Activated CD8-positive, alpha-beta T cell treated with anti-CD3 and anti-CD28 coated beads, Interleukin-2, amount 10 ng/mL, durations not matched to agents 7 days and 5 days (primary cell): ENCODE measurements at regions of chr11 and their contacts with region 1.

Region 1: GRCh38 chr11:130861902-130862860 is 54.1 kb downstream of the SNX19 start:
- DNase-seq: peak; percentile 91
- ATAC-seq: peak; percentile 94
- H3K4me3 Mint-ChIP-seq: no peak overlapping the region
- H3K27ac Mint-ChIP-seq: no peak overlapping the region
- H3K4me1 Mint-ChIP-seq: no peaks in the 10 kb centered on the region
- H3K27me3 Mint-ChIP-seq: peaks cover 3% of the 10 kb centered on the region

Region 2: DNA sequence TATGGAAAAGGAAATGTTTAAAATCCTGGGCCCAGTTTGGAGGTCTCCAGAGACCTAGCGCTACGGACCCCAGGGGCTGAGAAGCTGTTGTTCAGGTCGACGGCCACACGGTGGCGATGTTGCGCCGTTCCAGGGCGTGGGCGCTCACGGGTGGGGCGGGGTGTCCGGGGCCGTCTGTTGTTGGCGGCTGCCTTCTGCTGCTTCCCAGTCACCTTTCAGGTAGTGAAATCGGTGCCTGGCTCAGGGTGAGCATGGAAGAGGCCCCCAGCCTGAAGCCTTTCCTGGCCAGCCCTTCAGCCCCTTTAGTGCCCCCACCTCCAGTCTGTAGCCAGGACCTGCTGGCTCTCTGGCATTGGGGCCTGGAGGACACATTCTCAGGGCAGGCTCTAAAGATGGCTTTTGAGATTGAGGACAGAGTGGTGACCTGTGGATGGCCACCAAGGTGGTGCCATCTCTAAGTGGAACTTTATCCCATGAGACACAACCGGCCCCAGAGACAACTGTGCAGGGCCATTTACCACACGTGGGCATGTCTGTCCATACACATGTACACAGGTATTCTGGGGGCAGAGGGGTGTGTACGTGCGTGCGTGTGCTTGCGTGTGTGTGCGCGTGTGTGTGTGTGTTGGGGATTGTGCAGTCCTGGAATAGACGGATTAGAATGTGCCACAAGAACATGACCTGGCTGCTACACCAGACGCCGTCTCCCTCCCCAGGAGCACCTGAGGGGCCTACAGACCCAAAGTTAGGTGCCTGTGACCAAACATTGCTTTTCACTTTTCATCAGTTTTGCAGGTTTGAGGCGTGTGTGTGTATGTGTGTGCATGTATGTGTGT is 648.8 kb before region 1 on chr11:
- CTCF ChIA-PET with region 1: interaction called, 16 read pairs
- POLR2A ChIA-PET with region 1: no interaction called
- DNase-seq: peak; percentile 74
- ATAC-seq: peak; percentile 92
- H3K4me3 Mint-ChIP-seq: no peak overlapping the region
- H3K27ac Mint-ChIP-seq: no peak overlapping the region
- H3K4me1 Mint-ChIP-seq: no peaks in the 10 kb centered on the region
- H3K27me3 Mint-ChIP-seq: peaks cover 8% of the 10 kb centered on the region

Region 3: GRCh38 chr11:130427581-130428315 is 434.4 kb before region 1 on chr11:
- CTCF ChIA-PET with region 1: interaction called, 252 read pairs
- POLR2A ChIA-PET with region 1: interaction called, 10 read pairs
- DNase-seq: no peak
- ATAC-seq: peak; percentile 35
- H3K4me3 Mint-ChIP-seq: no peak overlapping the region
- H3K27ac Mint-ChIP-seq: no peak overlapping the region
- H3K4me1 Mint-ChIP-seq: peaks cover 12% of the 10 kb centered on the region
- H3K27me3 Mint-ChIP-seq: peaks cover 49% of the 10 kb centered on the region

Region 4: DNA sequence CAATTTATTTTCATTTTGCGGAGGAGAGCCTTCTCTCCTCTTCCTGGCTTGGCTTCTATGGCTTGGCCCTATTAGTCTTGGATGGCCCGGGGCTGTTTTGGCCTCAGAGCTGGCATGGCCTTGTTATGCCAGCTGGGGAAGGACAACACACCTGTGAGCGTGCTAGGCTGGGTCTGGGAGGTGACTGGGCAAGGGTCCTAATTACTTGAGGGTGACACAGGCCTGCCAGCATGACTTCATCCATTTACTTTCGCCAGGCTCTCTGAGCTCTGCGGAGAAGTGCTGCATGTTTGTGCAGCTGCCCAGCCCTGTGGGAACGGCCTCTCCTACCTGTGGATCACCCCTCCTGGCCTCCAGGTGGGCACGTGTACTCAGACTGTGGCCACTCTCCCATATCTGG is 99.5 kb before region 1 on chr11:
- CTCF ChIA-PET with region 1: no interaction called
- POLR2A ChIA-PET with region 1: no interaction called
- DNase-seq: no peak
- ATAC-seq: no peak
- H3K4me3 Mint-ChIP-seq: no peak overlapping the region
- H3K27ac Mint-ChIP-seq: no peak overlapping the region
- H3K4me1 Mint-ChIP-seq: peaks cover 15% of the 10 kb centered on the region
- H3K27me3 Mint-ChIP-seq: peaks cover 8% of the 10 kb centered on the region

Region 5: DNA sequence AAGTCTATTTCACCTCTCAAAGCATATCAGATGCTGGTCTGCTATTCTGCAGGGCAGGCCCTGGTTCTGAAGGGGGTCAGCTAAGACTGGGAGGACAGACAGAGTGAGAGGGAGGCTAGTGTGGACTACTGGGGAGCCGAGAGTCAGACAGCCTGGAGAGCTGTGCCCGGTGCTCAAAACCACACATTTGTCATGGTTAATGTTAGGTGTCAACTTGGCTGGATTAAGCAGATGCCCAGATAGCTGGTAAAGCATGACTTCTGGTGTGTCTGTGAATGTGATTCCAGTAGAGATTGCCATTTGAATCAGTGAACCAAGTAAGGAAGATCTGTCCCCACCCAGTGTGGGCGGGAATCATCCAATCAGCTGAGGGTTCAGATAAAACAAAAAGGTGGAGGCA is 48.5 kb before region 1 on chr11:
- CTCF ChIA-PET with region 1: no interaction called
- POLR2A ChIA-PET with region 1: no interaction called
- DNase-seq: no peak
- ATAC-seq: no peak
- H3K4me3 Mint-ChIP-seq: no peak overlapping the region
- H3K27ac Mint-ChIP-seq: no peak overlapping the region
- H3K4me1 Mint-ChIP-seq: no peaks in the 10 kb centered on the region
- H3K27me3 Mint-ChIP-seq: peaks cover 3% of the 10 kb centered on the region

Region 6: DNA sequence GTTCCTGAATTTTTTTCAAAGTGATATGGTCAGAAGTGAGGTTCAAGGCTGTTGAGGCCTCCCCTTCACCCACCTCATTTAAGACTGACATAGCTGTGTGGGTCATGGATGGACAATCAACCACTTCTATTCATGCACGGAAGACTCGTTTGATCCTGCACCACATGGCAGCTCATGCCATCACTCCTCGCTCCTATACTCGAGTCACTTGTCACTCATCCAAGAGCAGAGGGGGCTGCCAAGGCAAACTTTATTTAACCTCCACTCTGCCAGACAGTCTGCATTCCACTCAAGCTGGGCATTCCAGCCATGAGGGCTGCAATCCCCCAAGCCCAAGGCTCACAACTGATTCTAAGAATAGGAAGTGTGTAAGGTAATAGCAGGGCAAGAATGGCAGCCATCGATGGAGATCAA is 20.0 kb after region 1 on chr11:
- CTCF ChIA-PET with region 1: interaction called, 22 read pairs
- POLR2A ChIA-PET with region 1: no interaction called
- DNase-seq: no peak
- ATAC-seq: no peak
- H3K4me3 Mint-ChIP-seq: no peak overlapping the region
- H3K27ac Mint-ChIP-seq: no peak overlapping the region
- H3K4me1 Mint-ChIP-seq: peaks cover 3% of the 10 kb centered on the region
- H3K27me3 Mint-ChIP-seq: no peaks in the 10 kb centered on the region

Region 7: GRCh38 chr11:130894322-130895025 is 32.3 kb after region 1 on chr11:
- CTCF ChIA-PET with region 1: interaction called, 13 read pairs
- POLR2A ChIA-PET with region 1: no interaction called
- DNase-seq: peak; percentile 75
- ATAC-seq: peak; percentile 91
- H3K4me3 Mint-ChIP-seq: no peak overlapping the region
- H3K27ac Mint-ChIP-seq: no peak overlapping the region
- H3K4me1 Mint-ChIP-seq: no peaks in the 10 kb centered on the region
- H3K27me3 Mint-ChIP-seq: no peaks in the 10 kb centered on the region